ENCODE measurements at regions of chr9 and their contacts with region 1.

Region 1: DNA sequence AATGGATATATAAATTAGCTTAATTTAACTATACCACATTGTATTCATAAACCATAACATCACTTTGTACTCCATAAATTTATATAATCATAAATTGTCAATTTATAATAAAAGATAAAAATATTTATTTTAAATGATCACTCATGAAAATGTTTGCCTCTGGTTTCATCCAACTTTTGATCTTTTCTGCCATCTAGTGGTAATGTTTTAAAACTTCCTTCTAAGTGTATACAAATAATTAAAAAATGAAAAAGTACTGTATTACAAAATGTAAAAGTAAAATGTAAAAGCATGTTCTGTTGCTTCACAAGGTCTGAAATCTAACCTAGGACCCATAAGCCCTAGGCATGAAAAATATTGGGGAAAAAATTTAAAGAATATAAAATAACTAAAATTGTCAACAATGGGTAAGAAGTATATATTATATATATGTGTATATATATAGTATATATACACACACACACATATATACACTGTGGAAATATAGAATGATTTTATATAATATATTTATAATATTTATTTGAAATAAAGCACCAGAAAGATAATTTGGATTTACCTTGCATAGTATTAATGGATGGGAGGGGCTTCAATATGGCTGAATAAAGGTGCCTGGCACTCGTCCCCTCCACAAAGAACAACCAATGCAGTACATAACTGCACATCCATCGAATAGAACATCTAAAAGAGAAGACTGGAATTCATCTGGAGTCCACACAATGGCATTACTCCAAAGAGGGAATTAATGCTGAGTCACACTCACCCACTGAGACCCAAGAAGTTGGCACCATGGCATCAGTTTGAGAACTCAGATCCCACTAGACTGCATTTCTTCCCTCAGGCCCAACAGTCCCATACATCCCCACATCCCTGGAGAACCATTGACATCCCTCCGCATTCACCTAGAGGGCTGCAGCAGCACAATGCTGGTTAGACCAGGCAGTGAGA is 32.5 kb downstream of the ANXA1 start:
- DNase-seq: no peak
- H3K4me3 ChIP-seq: no peak overlapping the region
- H3K27ac ChIP-seq: no peak overlapping the region
- H3K4me1 ChIP-seq: no peaks in the 10 kb centered on the region
- H3K27me3 ChIP-seq: no peaks in the 10 kb centered on the region
- CTCF ChIP-seq: peak; percentile 53

Region 2: GRCh38 chr9:73114058-73114457 is 70.1 kb before region 1 on chr9:
- intact Hi-C with region 1: loop called (anchors 2 kb)
- DNase-seq: no peak
- H3K4me3 ChIP-seq: no peak overlapping the region
- H3K27ac ChIP-seq: no peak overlapping the region
- H3K4me1 ChIP-seq: no peaks in the 10 kb centered on the region
- H3K27me3 ChIP-seq: no peaks in the 10 kb centered on the region
- CTCF ChIP-seq: no peak